ENCODE measurements at regions of chr7 and their contacts with region 1.

Region 1: DNA sequence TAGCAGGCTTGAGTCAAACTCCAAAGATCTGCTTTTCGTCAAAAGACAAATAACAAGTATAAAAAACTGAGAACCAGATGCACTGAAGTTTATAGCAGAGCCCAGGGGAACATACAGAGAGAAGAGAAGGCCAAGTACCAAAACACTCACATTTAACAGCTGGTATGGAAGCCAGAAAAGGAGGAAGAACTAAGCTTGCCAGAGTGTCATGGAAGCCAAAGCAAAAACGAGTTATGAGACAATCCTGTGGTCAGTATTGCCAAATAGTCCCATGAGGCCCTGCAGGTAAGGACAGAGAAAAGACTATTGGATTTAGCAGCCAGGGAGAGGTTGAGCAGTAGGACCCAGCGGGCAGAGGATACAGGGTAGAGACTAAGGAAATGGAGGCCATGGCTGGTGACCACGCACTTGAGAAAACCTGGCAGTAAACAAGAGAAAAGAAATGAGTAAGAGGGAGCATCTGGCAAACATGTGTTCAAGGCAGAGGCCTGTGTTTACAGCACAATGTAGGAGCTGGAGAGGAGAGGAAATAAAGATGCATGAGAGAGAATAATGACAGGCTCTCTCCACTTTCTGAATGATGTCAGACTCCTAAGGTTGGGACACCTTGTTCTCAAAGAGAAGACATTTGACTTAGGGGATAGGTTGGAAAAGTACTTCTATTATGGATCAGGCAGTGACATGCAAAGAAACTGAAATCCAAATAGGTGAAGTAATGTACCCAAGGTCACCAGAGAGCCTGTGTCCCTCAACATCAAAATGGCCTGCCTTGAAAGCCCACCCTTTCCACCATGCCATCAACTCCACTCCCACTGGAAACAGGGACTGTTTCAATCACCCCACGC is 9.1 kb downstream of the CREB3L2 start:
- DNase-seq: peak; percentile 95
- H3K4me3 ChIP-seq: no peak overlapping the region
- H3K27ac ChIP-seq: peak overlapping the region; percentile 92
- H3K4me1 ChIP-seq: peaks cover 75% of the 10 kb centered on the region
- H3K27me3 ChIP-seq: no peaks in the 10 kb centered on the region
- CTCF ChIP-seq: no peak
- POLR2A ChIP-seq: no peak

Region 2: DNA sequence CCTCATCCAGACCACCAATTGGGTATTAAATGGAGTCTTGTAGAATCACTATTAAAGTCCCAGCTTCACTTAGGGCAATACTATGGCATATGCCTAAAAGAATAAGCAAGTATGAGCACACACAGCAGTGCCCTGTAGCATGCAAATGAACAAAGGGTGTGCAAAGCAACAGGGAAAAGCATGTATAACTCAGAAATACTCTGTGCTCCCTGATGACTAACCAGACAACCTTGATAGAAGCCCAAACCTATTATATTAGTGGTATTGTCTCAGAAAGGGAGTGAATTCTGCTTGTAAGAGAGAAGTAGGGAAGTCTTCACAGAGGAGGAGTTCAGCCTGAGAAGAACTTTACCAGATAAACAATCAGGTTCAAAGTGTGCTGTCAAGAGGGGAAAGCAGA is 277.2 kb before region 1 on chr7:
- CTCF ChIA-PET with region 1: no interaction called
- POLR2A ChIA-PET with region 1: no interaction called
- dilution Hi-C with region 1: no loop called
- intact Hi-C with region 1: no loop called
- DNase-seq: no peak
- H3K4me3 ChIP-seq: no peak overlapping the region
- H3K27ac ChIP-seq: no peak overlapping the region
- H3K4me1 ChIP-seq: no peaks in the 10 kb centered on the region
- H3K27me3 ChIP-seq: peaks cover 0 to 3% of the 10 kb centered on the region in 2 experiments
- CTCF ChIP-seq: no peak
- POLR2A ChIP-seq: no peak

Region 3: DNA sequence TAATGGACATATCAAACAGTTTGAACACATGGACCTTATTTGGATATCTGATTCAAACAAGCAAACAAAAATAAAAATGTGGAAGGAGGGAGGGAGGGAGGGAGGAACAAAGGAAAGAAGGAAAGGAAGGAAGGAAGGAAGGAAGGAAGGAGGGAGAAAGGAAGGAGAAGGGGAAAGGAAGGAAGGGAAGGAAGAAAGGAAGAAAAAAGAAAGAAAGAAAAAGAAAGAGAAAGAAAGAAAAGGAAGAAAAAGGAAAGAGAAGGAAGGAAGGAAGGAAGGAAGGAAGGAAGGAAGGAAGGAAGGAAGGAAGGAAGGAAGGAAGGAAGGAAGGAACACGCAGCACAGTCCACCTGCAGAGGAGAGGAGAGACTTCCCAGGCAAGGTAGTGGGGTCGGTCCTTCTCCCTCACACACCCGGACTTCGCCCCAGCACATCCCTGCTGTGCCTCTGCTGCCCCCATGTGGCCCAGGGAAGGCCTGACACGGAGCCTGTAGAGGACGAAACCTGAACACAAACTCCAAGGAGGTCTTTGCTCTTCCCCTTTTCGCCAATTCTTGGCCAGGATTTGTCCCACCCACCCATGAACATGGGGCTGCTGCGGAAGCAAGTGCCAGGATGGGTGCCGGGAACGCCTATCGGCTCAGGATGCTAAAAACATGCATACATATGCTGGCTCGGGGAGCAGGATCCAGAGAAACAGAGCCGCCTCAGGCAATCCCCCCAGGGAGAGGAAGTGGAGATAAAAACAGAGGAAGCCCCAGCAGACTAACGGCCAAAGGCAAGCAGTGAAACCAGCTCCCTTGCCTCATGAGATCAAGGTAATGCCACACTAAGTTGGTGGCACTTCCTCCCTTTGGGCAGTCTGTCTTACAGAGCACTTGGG is 93.7 kb before region 1 on chr7:
- CTCF ChIA-PET with region 1: interaction called, 360 read pairs
- POLR2A ChIA-PET with region 1: no interaction called
- dilution Hi-C with region 1: no loop called
- intact Hi-C with region 1: loop called (anchors 1 kb)
- DNase-seq: peak; percentile 73
- H3K4me3 ChIP-seq: no peak overlapping the region
- H3K27ac ChIP-seq: no peak overlapping the region
- H3K4me1 ChIP-seq: peaks cover 2% of the 10 kb centered on the region
- H3K27me3 ChIP-seq: no peaks in the 10 kb centered on the region
- CTCF ChIP-seq: peak; percentile 91 to 98
- POLR2A ChIP-seq: no peak

Region 4: DNA sequence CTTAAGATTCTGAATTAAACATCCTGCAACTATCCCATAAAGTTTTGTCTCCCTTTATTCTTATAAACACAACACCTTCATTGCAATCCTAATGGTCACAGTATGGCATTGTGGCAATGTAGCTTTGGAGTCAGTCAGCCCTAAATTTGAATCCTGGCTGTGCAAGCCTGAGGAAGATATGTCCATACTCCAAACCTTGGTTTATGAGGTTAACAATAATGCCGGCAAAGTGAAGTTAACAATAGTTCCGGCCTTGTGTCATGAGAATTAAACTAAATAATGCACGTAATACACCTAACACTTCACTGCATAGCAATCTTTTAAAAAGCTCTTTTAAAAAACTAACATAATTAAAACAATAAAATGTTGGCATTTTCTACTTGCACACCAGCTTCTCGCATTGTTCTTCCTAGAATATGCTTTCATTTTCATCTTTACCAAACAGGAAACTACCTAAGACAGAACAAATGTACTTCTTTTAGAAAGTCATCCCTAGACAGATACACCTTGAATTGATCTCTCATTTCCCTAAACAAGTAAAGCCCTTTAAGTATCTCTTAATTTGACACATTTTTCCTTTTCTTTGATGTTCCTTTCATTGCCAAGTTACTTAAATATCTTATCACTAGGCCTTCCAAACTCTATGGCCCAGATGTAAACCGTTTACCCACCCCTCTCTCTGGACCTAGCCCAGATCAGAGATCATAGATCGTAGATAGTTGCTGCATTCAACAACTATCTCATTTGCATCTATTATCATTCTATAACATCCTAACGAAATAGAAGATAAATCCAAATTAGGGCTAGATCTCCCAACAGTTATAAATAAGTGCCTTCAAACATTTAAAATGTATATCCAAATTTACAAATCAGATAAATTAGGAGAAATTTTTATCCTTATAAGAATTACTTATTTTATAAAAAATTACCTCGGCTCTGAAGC is 57.6 kb before region 1 on chr7:
- CTCF ChIA-PET with region 1: interaction called, 4 read pairs
- POLR2A ChIA-PET with region 1: no interaction called
- dilution Hi-C with region 1: no loop called
- intact Hi-C with region 1: loop called (anchors 2 kb)
- DNase-seq: peak; percentile 21
- H3K4me3 ChIP-seq: no peak overlapping the region
- H3K27ac ChIP-seq: no peak overlapping the region
- H3K4me1 ChIP-seq: peaks cover 36% of the 10 kb centered on the region
- H3K27me3 ChIP-seq: no peaks in the 10 kb centered on the region
- CTCF ChIP-seq: no peak
- POLR2A ChIP-seq: no peak

Region 5: GRCh38 chr7:137967143-137968018 is 25.4 kb before region 1 on chr7:
- CTCF ChIA-PET with region 1: interaction called, 23 read pairs
- POLR2A ChIA-PET with region 1: interaction called, 6 read pairs
- dilution Hi-C with region 1: no loop called
- intact Hi-C with region 1: loop called (anchors 1 kb)
- DNase-seq: peak; percentile 66
- H3K4me3 ChIP-seq: no peak overlapping the region
- H3K27ac ChIP-seq: peak overlapping the region; percentile 74
- H3K4me1 ChIP-seq: peaks cover 54% of the 10 kb centered on the region
- H3K27me3 ChIP-seq: no peaks in the 10 kb centered on the region
- CTCF ChIP-seq: no peak
- POLR2A ChIP-seq: no peak

Region 6: GRCh38 chr7:137978464-137979237 is 14.1 kb before region 1 on chr7:
- CTCF ChIA-PET with region 1: interaction called, 15 read pairs
- POLR2A ChIA-PET with region 1: interaction called, 24 read pairs
- dilution Hi-C with region 1: no loop called
- intact Hi-C with region 1: loop called (anchors 1 kb)
- DNase-seq: peak; percentile 95
- H3K4me3 ChIP-seq: no peak overlapping the region
- H3K27ac ChIP-seq: peak overlapping the region; percentile 74
- H3K4me1 ChIP-seq: peaks cover 32% of the 10 kb centered on the region
- H3K27me3 ChIP-seq: no peaks in the 10 kb centered on the region
- CTCF ChIP-seq: no peak
- POLR2A ChIP-seq: no peak